ENCODE measurements at regions of chr3 and their contacts with region 1.

Region 1: GRCh38 chr3:119662604-119663373 is 2.4 kb upstream of the POPDC2 start:
- DNase-seq: peak; percentile 68 to 83
- ATAC-seq: peak; percentile 75 to 77
- H3K4me3 ChIP-seq: no peak overlapping the region
- H3K27ac ChIP-seq: peak overlapping the region; percentile 94 to 96 (median 95)
- H3K4me1 ChIP-seq: peaks cover 50 to 60% of the 10 kb centered on the region in 2 donors
- H3K27me3 ChIP-seq: no peaks in the 10 kb centered on the region
- CTCF ChIP-seq: peak in 4 of 5 experiments; percentile 24 to 57 (median 28)
- POLR2A ChIP-seq: peak; percentile 63 to 84

Region 2: DNA sequence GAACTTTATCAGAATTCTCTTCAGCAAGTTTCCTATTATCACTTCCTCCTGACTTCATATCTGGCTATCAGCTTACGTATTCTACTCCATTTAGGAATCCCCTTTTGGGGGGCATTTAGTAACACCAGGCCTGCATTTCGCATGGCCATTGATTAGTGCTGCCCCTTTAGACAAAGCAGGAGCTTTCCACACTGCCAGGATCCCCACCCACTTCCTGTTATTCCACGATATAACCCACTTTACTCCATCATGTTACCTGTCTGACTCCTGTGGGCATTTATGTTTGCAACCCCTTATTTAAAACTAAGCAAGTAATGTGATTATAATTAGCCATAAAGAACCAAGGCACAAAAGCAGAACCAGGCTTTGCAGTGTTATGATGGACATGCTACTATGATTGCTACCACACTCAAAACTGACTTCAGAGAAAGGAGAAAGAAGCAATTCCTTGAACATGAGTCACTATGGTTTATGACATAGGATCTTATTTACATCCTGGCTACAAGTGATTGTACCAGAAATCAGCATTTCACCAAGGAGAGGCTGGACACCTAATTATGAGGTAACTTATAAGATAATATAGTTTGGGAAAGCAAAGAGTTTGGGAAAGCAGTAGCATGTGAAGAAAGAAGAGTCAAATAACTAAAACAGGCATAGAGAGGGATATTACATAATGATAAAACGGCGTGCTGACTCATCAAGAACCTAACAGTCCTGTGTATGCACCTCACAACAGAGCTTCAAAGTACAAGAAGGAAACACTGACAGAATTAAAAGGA is 724.4 kb before region 1 on chr3:
- in situ Hi-C with region 1: no loop called
- intact Hi-C with region 1: loop called (anchors 10 kb)
- DNase-seq: no peak
- ATAC-seq: peak in 1 of 2 donors; percentile 31
- H3K4me3 ChIP-seq: no peak overlapping the region
- H3K27ac ChIP-seq: peak overlapping the region in 1 of 4 donors; percentile 90
- H3K4me1 ChIP-seq: peaks cover 41 to 68% of the 10 kb centered on the region in 2 donors
- H3K27me3 ChIP-seq: no peaks in the 10 kb centered on the region
- CTCF ChIP-seq: no peak
- POLR2A ChIP-seq: no peak

Region 3: GRCh38 chr3:119630128-119630879 is 32.5 kb before region 1 on chr3:
- in situ Hi-C with region 1: no loop called
- intact Hi-C with region 1: loop called (anchors 2 kb)
- DNase-seq: peak; percentile 76 to 91
- ATAC-seq: peak; percentile 92 to 95
- H3K4me3 ChIP-seq: no peak overlapping the region
- H3K27ac ChIP-seq: peak overlapping the region; percentile 84 to 95 (median 90)
- H3K4me1 ChIP-seq: peaks cover 75% of the 10 kb centered on the region in 2 donors
- H3K27me3 ChIP-seq: no peaks in the 10 kb centered on the region
- CTCF ChIP-seq: peak in 1 of 5 experiments; percentile 8
- POLR2A ChIP-seq: no peak

Measured in gastrocnemius medialis (tissue), 4 donors.